ENCODE measurements at regions of chr5 and their contacts with region 1.

Region 1: GRCh38 chr5:60883229-60883628 is 39.2 kb upstream of the ELOVL7 start:
- DNase-seq: no peak
- H3K4me3 Mint-ChIP-seq: no peak overlapping the region
- H3K27ac Mint-ChIP-seq: no peak overlapping the region
- H3K4me1 Mint-ChIP-seq: peaks cover under 1% of the 10 kb centered on the region
- H3K27me3 Mint-ChIP-seq: no peaks in the 10 kb centered on the region

Region 2: DNA sequence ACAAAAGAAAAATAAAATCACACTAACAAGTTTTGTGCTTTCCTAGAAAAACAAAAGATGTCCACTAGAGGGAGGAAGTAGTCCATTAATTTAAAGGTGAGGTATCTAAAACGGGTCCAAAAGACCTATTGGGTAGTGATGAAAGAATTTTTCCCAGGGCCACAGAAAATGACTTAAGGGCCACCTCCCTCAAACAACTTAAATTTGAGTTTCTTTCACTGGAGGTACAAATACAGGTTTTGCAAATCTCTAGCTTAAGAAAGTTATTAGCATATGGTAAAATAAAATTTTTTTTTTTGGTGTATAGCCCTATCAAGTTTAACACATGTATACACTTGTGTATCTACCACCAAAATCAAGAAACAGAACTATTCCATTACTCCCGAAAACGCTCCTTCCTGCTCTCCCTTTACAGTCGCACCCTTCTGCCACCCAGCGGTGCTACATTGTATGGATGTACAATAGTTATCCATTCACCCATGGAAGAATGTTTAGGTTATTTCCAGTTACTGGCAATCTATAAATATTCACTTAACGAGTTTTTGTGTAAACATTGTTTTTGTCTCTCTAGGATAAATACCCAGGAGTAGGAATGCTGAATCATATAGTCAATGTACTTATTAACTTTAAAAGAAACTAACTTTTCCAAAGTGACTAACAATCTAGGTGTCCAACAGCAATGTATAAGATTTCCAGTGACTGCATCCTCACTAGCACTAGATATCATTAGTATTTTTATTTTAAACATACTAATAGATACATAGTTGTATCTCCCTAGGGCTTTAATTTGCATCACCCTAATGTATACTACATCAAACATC is 205.2 kb before region 1 on chr5:
- intact Hi-C with region 1: loop called (anchors 1 kb)
- DNase-seq: no peak
- H3K4me3 Mint-ChIP-seq: no peak overlapping the region
- H3K27ac Mint-ChIP-seq: no peak overlapping the region
- H3K4me1 Mint-ChIP-seq: peaks cover 12% of the 10 kb centered on the region
- H3K27me3 Mint-ChIP-seq: no peaks in the 10 kb centered on the region

Region 3: DNA sequence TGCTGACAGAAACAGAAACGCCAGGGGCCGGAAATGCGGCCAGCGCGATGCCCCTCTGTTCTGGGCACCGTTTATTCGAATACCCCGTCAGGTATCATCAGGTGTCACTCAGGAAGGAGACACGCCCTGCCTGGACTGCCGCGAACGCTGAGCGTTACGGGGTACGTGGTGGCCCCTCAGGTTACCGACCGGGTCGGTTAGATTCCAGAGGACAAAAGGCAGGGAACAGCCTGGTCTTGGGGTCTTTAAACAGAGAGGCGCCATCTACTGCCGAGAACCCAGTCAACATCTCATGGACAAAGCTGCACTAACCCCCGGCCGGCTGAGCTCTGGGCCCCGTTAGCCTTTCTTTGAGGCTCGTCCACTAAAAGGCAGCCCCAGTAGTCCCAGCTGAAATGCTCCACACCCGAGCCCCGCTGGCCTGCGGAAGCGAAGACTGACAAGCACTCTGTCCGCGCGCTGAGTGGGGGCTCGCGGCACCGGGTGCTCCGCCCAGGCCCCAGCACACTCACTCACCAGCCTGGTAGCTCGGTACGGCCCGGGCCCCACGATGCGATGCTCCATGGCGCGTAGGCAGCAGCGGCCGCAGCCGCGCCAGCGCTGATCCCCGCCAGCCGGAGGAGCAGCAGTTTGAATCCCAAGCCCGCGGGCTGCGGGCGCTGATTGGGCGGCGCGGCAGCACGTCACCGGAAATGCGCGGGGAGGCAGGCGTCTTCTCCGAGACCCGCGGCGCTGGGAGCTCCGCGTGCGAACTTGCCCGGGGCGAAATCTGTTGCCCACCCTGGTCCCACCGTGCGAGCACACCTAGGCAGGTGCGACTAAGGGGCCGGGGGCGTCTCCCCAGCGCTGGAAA is 183.5 kb before region 1 on chr5 and contains the start of gene DEPDC1B:
- intact Hi-C with region 1: no loop called
- DNase-seq: peak; percentile 86
- H3K4me3 Mint-ChIP-seq: peak within 1 kb of the TSS; percentile 93
- H3K27ac Mint-ChIP-seq: peak within 1 kb of the TSS; percentile 91
- H3K4me1 Mint-ChIP-seq: peaks cover 30% of the 10 kb centered on the region
- H3K27me3 Mint-ChIP-seq: peaks cover 25% of the 10 kb centered on the region
- total RNA-seq, gene DEPDC1B: 22.2 and 25.1 TPM in 2 replicates